Naive thymus-derived CD4-positive, alpha-beta T cell (primary cell): ENCODE measurements at regions of chr10 and their contacts with region 1.

Region 1: GRCh38 chr10:45000752-45001380 is at the start of gene ZNF22:
- DNase-seq: peak; percentile 52 to 77 (median 71)
- ATAC-seq: peak; percentile 88
- H3K4me3 ChIP-seq: peak within 1 kb of the TSS; percentile 81
- H3K4me3 Mint-ChIP-seq: peak within 1 kb of the TSS; percentile 77 to 96 (median 93)
- H3K27ac ChIP-seq: peak within 1 kb of the TSS; percentile 68
- H3K27ac Mint-ChIP-seq: peak within 1 kb of the TSS; percentile 78 to 94 (median 91)
- H3K4me1 ChIP-seq: peaks cover 15 to 16% of the 10 kb centered on the region in 2 donors
- H3K4me1 Mint-ChIP-seq: peaks cover 16 to 52% (median 39%) of the 10 kb centered on the region in 7 donors
- H3K27me3 ChIP-seq: no peaks in the 10 kb centered on the region
- H3K27me3 Mint-ChIP-seq: peaks cover 0 to 8% (median 0%) of the 10 kb centered on the region in 5 donors
- total RNA-seq, gene ZNF22: 13.1 to 33.6 (median 27.4) TPM

Region 2: GRCh38 chr10:44932517-44933450 is 68.1 kb before region 1 on chr10:
- CTCF ChIA-PET with region 1: interaction called, 3 read pairs
- POLR2A ChIA-PET with region 1: no interaction called
- intact Hi-C with region 1: loop called in 1 of 2 experiments (anchors 2 kb)
- DNase-seq: peak; percentile 55 to 89 (median 72)
- ATAC-seq: peak; percentile 94
- H3K4me3 ChIP-seq: no peak overlapping the region
- H3K4me3 Mint-ChIP-seq: no peak overlapping the region
- H3K27ac ChIP-seq: no peak overlapping the region
- H3K27ac Mint-ChIP-seq: no peak overlapping the region
- H3K4me1 ChIP-seq: peaks cover 0 to 4% of the 10 kb centered on the region in 2 donors
- H3K4me1 Mint-ChIP-seq: peaks cover 7 to 16% (median 11%) of the 10 kb centered on the region in 7 donors
- H3K27me3 ChIP-seq: no peaks in the 10 kb centered on the region
- H3K27me3 Mint-ChIP-seq: peaks cover 0 to 6% (median 4%) of the 10 kb centered on the region in 5 donors